Pancreas (tissue), 10 donors: ENCODE measurements at regions of chr7 and their contacts with region 1.

Region 1: GRCh38 chr7:157138424-157139110 is at the start of gene UBE3C:
- DNase-seq: peak; percentile 88 to 96 (median 93)
- ATAC-seq: peak; percentile 92 to 95 (median 94)
- H3K4me3 ChIP-seq: peak within 1 kb of the TSS; percentile 59 to 79 (median 64)
- H3K27ac ChIP-seq: peak within 1 kb of the TSS; percentile 78 to 94 (median 89)
- H3K4me1 ChIP-seq: peaks cover 11 to 30% (median 11%) of the 10 kb centered on the region in 3 donors
- H3K27me3 ChIP-seq: no peaks in the 10 kb centered on the region
- CTCF ChIP-seq: peak in 1 of 4 donors; percentile 7
- total RNA-seq, gene UBE3C: 20.2 to 36.1 (median 24.5) TPM

Region 2: GRCh38 chr7:157010588-157011332 is 127.8 kb before region 1 on chr7 and contains the start of gene MNX1:
- intact Hi-C with region 1: loop called in 2 of 3 experiments (anchors 10 kb)
- DNase-seq: peak; percentile 88 to 97 (median 92)
- ATAC-seq: peak; percentile 88 to 95 (median 90)
- H3K4me3 ChIP-seq: peak within 1 kb of the TSS; percentile 53 to 86 (median 76)
- H3K27ac ChIP-seq: peak within 1 kb of the TSS; percentile 82 to 90 (median 86)
- H3K4me1 ChIP-seq: peaks cover 0 to 18% (median 0%) of the 10 kb centered on the region in 3 donors
- H3K27me3 ChIP-seq: no peaks in the 10 kb centered on the region
- CTCF ChIP-seq: no peak
- total RNA-seq, gene MNX1: 15.6 to 33.8 (median 21.9) TPM

Region 3: GRCh38 chr7:157292699-157293412 is 154.3 kb after region 1 on chr7:
- intact Hi-C with region 1: no loop called
- DNase-seq: peak in 1 of 6 donors; percentile 69
- ATAC-seq: peak in 3 of 4 donors; percentile 29 to 58 (median 53)
- H3K4me3 ChIP-seq: no peak overlapping the region
- H3K27ac ChIP-seq: no peak overlapping the region
- H3K4me1 ChIP-seq: no peaks in the 10 kb centered on the region
- H3K27me3 ChIP-seq: no peaks in the 10 kb centered on the region
- CTCF ChIP-seq: no peak